Transverse colon (tissue), 4 donors: ENCODE measurements at regions of chr2 and their contacts with region 1.

Region 1: DNA sequence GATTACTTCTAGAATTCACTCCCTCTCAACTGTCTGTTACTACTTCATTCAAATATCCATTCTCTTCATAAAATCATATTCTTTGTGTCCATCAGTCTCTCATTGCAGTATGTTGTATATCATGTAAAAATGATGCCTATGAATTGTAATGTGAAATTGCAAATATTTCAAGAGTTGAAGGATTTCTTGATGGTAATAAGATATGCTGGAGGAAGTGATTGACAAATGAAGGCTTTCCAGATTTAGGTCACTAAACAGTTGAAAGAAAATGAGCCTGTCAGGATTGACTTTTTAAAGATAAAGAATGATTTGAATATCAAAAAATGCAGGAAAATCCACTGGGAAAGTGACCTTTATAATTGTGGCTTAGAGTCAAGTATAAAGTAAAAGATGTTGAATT is 51.4 kb downstream of the CLIP4 start:
- DNase-seq: no peak
- H3K4me3 ChIP-seq: no peak overlapping the region
- H3K27ac ChIP-seq: no peak overlapping the region
- H3K4me1 ChIP-seq: no peaks in the 10 kb centered on the region
- H3K27me3 ChIP-seq: no peaks in the 10 kb centered on the region
- CTCF ChIP-seq: no peak
- EP300 ChIP-seq: no peak
- POLR2A ChIP-seq: no peak

Region 2: GRCh38 chr2:29196792-29197788 is 30.4 kb after region 1 on chr2:
- in situ Hi-C with region 1: no loop called
- intact Hi-C with region 1: loop called (anchors 1 kb)
- DNase-seq: peak; percentile 75
- H3K4me3 ChIP-seq: no peak overlapping the region
- H3K27ac ChIP-seq: no peak overlapping the region
- H3K4me1 ChIP-seq: no peaks in the 10 kb centered on the region
- H3K27me3 ChIP-seq: no peaks in the 10 kb centered on the region
- CTCF ChIP-seq: peak; percentile 68 to 82 (median 74)
- EP300 ChIP-seq: no peak
- POLR2A ChIP-seq: no peak

Region 3: DNA sequence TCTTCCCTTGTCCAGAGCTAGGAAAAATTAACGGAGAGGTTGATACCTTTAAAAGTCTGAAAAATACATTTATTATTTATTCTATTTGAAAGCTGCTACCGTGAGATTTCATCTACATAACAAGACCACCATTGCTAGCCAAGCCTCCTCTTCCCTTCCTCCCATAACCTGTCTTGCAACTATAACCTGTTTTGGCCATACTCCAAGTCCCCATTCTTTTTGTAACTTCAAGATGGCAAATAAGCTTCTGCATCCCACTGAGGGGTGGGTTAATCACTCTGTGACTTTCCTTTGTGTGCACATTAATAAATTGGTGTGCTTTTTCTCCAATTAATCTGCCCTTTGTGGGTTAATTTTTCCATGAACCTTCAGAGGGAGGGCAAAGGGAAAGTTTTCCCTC is 375.1 kb after region 1 on chr2:
- in situ Hi-C with region 1: no loop called
- intact Hi-C with region 1: no loop called
- DNase-seq: no peak
- H3K4me3 ChIP-seq: no peak overlapping the region
- H3K27ac ChIP-seq: no peak overlapping the region
- H3K4me1 ChIP-seq: no peaks in the 10 kb centered on the region
- H3K27me3 ChIP-seq: no peaks in the 10 kb centered on the region
- CTCF ChIP-seq: no peak
- EP300 ChIP-seq: no peak
- POLR2A ChIP-seq: no peak